ENCODE measurements at regions of chr11 and their contacts with region 1.

Region 1: DNA sequence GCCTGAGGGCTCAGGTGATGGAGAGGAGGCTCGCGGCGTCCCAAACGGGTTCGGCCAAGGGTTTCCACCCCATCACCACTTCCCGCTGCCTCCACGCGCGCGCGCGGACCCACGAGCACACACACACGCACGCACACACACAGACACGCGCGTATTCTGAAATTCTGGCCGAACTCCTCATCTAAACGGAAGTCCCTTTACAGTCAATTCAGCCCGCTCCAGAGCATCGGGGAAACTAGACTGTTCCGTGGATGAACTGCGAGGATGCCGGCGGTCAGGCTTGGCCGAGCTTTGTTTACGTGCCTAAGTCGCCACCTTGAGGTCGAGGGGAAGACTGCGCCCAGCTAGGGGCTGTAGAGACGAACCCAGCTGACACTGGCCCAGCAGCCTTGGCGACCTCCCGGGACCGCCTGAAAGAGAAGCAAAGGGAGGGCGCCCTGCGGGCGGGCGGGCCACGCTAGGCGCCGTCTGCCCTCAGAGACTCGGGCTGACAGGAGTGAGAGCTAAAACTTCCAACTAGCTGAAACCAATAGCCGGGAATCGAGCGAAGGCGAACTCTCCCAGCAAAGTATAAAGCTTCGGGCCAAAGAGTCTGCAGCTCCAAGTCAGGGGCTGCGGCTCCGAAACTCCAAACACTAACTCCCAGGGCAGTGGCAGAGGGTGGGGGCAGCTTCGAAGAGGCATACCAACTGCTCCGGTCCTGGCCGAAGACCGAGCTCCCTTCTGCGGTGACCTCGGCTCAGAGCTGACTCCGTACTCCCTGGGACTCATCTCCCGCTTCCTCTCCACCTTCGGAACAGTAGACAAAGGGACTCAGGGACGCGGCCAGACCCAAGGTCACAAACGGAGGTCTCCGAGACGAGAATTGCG is 124.7 kb upstream of the C11orf58 start:
- DNase-seq: peak; percentile 91
- H3K4me3 ChIP-seq: peak overlapping the region; percentile 54 to 62
- H3K27ac ChIP-seq: peak overlapping the region in 1 of 2 experiments; percentile 69; a peak in 1 of 4 replicates
- H3K4me1 ChIP-seq: peaks cover 0 to 21% of the 10 kb centered on the region in 2 experiments; a peak in 2 of 4 replicates
- H3K27me3 ChIP-seq: peaks cover 32% of the 10 kb centered on the region; the same call in 1 of the 2 replicates
- CTCF ChIP-seq: peak; percentile 80
- EP300 ChIP-seq: no peak
- RAD21 ChIP-seq: peak; percentile 95

Region 2: DNA sequence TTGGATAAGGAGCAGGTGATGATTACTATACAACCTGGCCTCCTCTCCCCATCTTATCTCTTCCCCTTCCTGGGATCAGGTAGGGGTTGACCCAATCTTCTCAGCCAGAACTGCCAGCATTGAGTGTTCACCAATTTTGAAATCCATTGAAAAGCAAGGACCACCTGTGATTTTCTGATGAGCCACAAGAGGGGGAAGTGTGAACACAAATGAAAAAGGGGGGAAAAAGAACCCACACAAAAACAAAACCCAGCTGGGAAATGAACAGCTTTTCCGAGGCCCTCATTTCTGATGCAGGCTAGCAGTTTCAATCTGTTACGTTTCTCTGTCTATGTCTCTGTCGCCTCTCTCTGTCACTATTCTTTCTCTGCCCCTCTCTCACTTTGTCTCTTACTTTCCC is 1337.1 kb before region 1 on chr11:
- CTCF ChIA-PET with region 1: interaction called, 40 read pairs
- POLR2A ChIA-PET with region 1: interaction called, 4 read pairs
- DNase-seq: peak; percentile 42
- H3K4me3 ChIP-seq: no peak overlapping the region
- H3K27ac ChIP-seq: no peak overlapping the region
- H3K4me1 ChIP-seq: no peaks in the 10 kb centered on the region; a peak in 2 of 4 replicates
- H3K27me3 ChIP-seq: no peaks in the 10 kb centered on the region
- CTCF ChIP-seq: peak; percentile 37; the same call in 1 of the 2 replicates
- EP300 ChIP-seq: no peak
- RAD21 ChIP-seq: peak; percentile 84

Region 3: DNA sequence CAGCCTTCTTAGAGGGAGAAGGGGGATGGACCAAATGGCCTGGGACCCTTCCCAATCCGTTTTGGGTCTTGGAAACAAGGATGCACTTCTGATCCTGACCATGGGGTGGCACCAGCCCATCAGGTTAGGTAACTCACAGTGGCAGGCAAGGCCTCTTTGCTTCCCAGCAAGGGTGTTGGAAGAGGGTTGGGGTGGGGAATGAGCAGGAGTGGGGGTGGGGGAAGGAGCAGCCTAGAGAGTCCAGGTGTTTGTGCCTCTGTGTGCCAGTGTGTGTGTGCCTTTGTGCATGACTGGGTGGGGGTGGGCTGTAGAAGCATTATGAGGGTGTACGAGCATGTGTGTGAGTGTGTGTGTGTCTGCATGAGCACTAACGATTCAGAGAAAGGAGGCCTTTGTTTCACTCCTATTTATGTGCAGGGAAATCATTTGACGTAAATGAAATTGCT is 1285.9 kb before region 1 on chr11:
- CTCF ChIA-PET with region 1: interaction called, 10 read pairs
- POLR2A ChIA-PET with region 1: no interaction called
- DNase-seq: peak; percentile 68
- H3K4me3 ChIP-seq: no peak overlapping the region; a peak in 1 of 4 replicates
- H3K27ac ChIP-seq: peak overlapping the region in 1 of 2 experiments; percentile 39; a peak in 1 of 4 replicates
- H3K4me1 ChIP-seq: peaks cover 0 to 8% of the 10 kb centered on the region in 2 experiments; a peak in 2 of 4 replicates
- H3K27me3 ChIP-seq: no peaks in the 10 kb centered on the region
- CTCF ChIP-seq: peak; percentile 22; the same call in 1 of the 2 replicates
- EP300 ChIP-seq: no peak; a peak in 1 of 4 replicates
- RAD21 ChIP-seq: peak; percentile 92

Region 4: DNA sequence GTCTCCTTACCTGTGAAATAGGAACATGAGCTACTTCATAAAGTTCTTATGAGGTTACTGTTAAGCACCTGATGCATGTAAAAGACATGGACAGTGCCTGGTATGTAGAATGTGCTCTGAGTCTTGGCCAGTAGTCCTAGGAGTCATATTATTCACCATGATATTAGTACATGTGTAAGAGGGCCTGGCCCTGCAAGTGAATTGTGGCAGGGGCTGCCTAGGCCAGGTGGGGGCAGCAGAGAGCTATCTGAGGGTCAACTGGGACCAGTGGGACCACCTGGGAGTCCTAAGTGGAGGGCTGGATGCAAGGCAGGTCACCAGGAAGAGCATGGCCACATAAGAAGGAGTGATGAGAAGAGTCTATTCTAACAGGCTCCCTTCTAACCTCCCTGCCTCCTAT is 786.9 kb before region 1 on chr11:
- CTCF ChIA-PET with region 1: interaction called, 13 read pairs
- POLR2A ChIA-PET with region 1: no interaction called
- DNase-seq: peak; percentile 63
- H3K4me3 ChIP-seq: no peak overlapping the region
- H3K27ac ChIP-seq: no peak overlapping the region; a peak in 1 of 4 replicates
- H3K4me1 ChIP-seq: peaks cover 0 to 11% of the 10 kb centered on the region in 2 experiments; a peak in 1 of 4 replicates
- H3K27me3 ChIP-seq: no peaks in the 10 kb centered on the region; the same call in 1 of the 2 replicates
- CTCF ChIP-seq: peak; percentile 61
- EP300 ChIP-seq: no peak
- RAD21 ChIP-seq: peak; percentile 86

Region 5: GRCh38 chr11:16632295-16633200 is 18.8 kb after region 1 on chr11:
- CTCF ChIA-PET with region 1: interaction called, 14 read pairs
- POLR2A ChIA-PET with region 1: no interaction called
- DNase-seq: no peak
- H3K4me3 ChIP-seq: no peak overlapping the region
- H3K27ac ChIP-seq: no peak overlapping the region
- H3K4me1 ChIP-seq: no peaks in the 10 kb centered on the region
- H3K27me3 ChIP-seq: no peaks in the 10 kb centered on the region
- CTCF ChIP-seq: peak; percentile 56
- EP300 ChIP-seq: no peak
- RAD21 ChIP-seq: peak; percentile 34

Region 6: DNA sequence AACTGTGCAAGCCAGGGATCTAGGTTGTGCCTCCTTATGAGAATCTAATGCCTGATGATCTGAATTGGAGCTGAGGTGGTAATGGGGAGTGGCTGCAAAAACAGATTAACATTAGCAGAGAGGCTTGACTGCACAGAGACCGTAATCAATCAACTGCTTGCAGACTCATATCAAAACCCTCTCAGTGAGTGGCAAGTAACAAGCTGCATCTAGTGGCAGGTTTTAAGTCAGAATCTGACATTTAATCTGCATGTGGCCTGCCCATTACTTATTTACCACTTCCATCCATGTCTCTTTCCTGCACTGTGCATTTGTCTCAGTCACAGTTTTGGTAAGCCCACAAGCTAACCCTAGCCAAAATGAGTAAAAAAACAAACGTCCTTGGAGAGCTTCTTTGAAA is 135.9 kb after region 1 on chr11:
- CTCF ChIA-PET with region 1: no interaction called
- POLR2A ChIA-PET with region 1: no interaction called
- DNase-seq: no peak
- H3K4me3 ChIP-seq: no peak overlapping the region
- H3K27ac ChIP-seq: no peak overlapping the region
- H3K4me1 ChIP-seq: no peaks in the 10 kb centered on the region; a peak in 1 of 4 replicates
- H3K27me3 ChIP-seq: no peaks in the 10 kb centered on the region
- CTCF ChIP-seq: no peak
- EP300 ChIP-seq: no peak
- RAD21 ChIP-seq: no peak